ENCODE measurements at regions of chr4 and their contacts with region 1.

Region 1: DNA sequence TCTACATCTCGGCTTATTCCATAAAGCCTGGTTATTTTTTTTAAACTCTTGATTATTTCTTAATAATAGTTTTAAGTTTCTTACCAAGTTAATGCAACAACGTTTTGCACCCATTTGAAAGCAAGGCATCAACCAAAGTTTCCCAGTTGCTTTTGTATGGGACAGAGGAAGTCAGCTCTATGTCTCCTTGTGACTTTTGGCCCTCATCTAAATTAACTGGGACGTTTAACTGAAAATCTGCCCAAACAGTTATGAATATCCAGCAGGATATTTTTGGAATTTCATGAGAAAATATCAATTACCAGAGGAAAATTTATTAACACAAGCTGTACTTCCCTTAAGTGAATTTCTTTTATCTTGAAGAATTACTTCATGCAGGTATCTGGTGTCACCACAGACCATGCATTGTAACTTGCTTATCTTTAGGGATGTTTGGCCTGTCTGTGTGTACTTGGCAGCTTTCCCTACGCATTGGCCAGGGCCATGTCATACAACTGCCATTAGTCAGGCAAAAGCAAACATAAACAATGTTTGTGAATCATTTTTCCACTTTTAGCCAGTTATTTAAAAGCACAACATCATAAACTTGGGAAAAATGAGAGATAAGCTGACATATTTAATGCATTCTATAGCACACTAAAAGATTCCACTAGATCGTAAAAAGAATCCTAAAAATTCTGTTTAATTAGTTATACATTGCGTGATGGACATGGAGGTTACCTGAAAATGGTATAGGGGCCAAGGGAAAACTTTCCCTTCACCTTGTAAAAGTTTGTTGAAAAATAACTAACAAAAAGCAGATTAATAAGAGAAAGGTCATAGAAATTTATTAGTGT is 101.4 kb upstream of the PDE5A start:
- DNase-seq: no peak

Region 2: DNA sequence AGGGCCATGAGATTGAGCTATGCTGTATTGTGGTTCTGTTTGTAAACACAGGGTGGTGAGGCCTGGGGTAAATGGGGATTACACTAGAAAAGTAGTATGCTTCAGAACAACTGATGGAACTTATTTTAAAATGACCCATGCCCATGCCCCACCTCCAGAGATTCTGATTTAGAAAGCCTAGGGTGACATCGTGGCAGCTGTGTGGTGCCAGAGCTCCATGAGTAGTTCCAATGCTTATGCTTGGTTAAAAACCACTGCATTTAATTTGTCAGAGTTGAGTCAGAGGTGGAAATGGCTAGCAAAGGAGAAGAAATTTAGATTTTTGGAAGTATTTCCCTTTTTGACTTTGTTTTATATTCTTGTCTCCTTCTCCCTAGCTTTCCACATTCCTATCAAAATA is 38.1 kb before region 1 on chr4:
- intact Hi-C with region 1: loop called (anchors 5 kb)
- DNase-seq: no peak

Region 3: DNA sequence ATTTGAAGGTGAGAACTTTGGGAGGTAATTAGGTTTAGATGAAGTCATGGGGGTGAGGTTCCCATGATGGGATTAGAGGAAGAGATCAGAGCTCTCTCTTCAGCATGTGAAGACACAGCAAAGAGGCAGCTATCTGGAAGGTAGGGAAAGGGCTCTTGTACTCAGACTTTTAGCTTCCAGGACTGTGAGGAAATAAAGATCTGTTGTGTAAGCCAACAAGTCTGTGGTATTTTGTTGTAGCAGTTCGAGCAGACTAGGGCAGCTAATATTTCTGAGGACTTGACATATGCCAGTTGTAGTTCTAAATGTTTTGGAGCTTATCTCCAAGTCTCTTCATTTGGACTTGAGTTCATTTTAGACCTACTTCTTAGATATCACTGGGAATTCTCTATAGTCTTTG is 35.9 kb after region 1 on chr4:
- intact Hi-C with region 1: no loop called
- DNase-seq: no peak

Region 4: GRCh38 chr4:119785963-119786362 is 55.9 kb after region 1 on chr4:
- intact Hi-C with region 1: loop called (anchors 10 kb)
- DNase-seq: no peak

Region 5: GRCh38 chr4:119946359-119946758 is 216.3 kb after region 1 on chr4:
- intact Hi-C with region 1: no loop called
- DNase-seq: no peak